Dorsolateral prefrontal cortex (tissue), 120 donors: ENCODE measurements at regions of chr3 and their contacts with region 1.

Region 1: GRCh38 chr3:9302425-9303181 is 53.2 kb upstream of the SRGAP3 start:
- DNase-seq: peak; percentile 74 to 91 (median 84)
- H3K4me3 ChIP-seq: peak overlapping the region; percentile 20 to 71 (median 52)
- H3K27ac ChIP-seq: peak overlapping the region in 34 of 59 donors; percentile 5 to 82 (median 46)
- H3K27me3 ChIP-seq: no peaks in the 10 kb centered on the region
- CTCF ChIP-seq: peak; percentile 77 to 99 (median 95)

Region 2: GRCh38 chr3:8970971-8971589 is 331.5 kb before region 1 on chr3:
- intact Hi-C with region 1: loop called (anchors 2 kb)
- DNase-seq: peak in 8 of 10 donors; percentile 45 to 78 (median 68)
- H3K4me3 ChIP-seq: peak overlapping the region in 37 of 59 donors; percentile 1 to 51 (median 25)
- H3K27ac ChIP-seq: peak overlapping the region in 3 of 59 donors; percentile 32 to 59 (median 50)
- H3K27me3 ChIP-seq: peaks cover 0 to 7% (median 0%) of the 10 kb centered on the region in 45 donors
- CTCF ChIP-seq: peak; percentile 90 to 100 (median 99)

Region 3: GRCh38 chr3:8987645-8988383 is 314.8 kb before region 1 on chr3:
- intact Hi-C with region 1: loop called (anchors 5 kb)
- DNase-seq: peak in 9 of 10 donors; percentile 61 to 83 (median 74)
- H3K4me3 ChIP-seq: no peak overlapping the region
- H3K27ac ChIP-seq: peak overlapping the region in 13 of 59 donors; percentile 6 to 69 (median 31)
- H3K27me3 ChIP-seq: no peaks in the 10 kb centered on the region
- CTCF ChIP-seq: peak; percentile 47 to 91 (median 83)

Region 4: DNA sequence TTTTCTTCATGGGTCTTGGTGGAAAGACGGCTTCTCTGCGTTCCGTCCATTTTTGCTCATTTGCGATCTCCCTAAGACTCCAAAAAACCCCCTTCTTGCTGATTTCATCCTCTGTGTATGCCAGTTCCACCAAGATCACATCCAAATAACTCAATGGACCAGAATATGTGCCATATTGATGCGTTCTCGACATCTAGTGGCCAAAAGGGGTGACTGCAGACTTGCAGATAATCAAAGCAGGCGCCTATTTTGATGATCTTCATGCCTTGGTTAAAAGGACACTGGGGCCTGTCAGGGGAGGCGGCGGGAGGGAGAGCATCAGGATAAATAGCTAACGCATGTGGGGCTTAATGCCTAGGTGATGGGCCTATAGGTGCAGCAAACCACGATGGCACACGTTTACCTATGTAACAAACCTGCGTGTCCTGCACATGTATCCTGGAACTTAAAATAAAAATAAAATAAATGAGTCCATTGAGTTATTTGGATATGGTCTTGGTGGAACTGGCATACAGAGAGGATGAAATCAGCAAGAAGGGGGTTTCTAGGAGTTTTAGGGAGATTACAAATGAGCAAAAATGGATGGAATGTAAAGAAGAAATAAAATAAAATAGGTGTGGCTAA is 235.1 kb before region 1 on chr3:
- intact Hi-C with region 1: loop called in 1 of 2 experiments (anchors 2 kb)
- DNase-seq: peak in 5 of 10 donors; percentile 42 to 81 (median 70)
- H3K4me3 ChIP-seq: peak overlapping the region in 1 of 59 donors; percentile 29
- H3K27ac ChIP-seq: peak overlapping the region in 49 of 59 donors; percentile 6 to 82 (median 60)
- H3K27me3 ChIP-seq: no peaks in the 10 kb centered on the region
- CTCF ChIP-seq: peak; percentile 69 to 96 (median 89)

Region 5: GRCh38 chr3:9078561-9079240 is 223.9 kb before region 1 on chr3:
- intact Hi-C with region 1: loop called in 1 of 2 experiments (anchors 5 kb)
- DNase-seq: no peak
- H3K4me3 ChIP-seq: no peak overlapping the region
- H3K27ac ChIP-seq: no peak overlapping the region
- H3K27me3 ChIP-seq: no peaks in the 10 kb centered on the region
- CTCF ChIP-seq: peak in 2 of 56 donors; percentile 3 to 11

Region 6: GRCh38 chr3:9172851-9173321 is 129.7 kb before region 1 on chr3:
- intact Hi-C with region 1: loop called in 1 of 2 experiments (anchors 5 kb)
- DNase-seq: peak in 5 of 10 donors; percentile 33 to 59 (median 58)
- H3K4me3 ChIP-seq: peak overlapping the region in 33 of 59 donors; percentile 2 to 48 (median 13)
- H3K27ac ChIP-seq: peak overlapping the region in 55 of 59 donors; percentile 1 to 84 (median 66)
- H3K27me3 ChIP-seq: no peaks in the 10 kb centered on the region
- CTCF ChIP-seq: peak in 34 of 56 donors; percentile 6 to 59 (median 31)

Region 7: DNA sequence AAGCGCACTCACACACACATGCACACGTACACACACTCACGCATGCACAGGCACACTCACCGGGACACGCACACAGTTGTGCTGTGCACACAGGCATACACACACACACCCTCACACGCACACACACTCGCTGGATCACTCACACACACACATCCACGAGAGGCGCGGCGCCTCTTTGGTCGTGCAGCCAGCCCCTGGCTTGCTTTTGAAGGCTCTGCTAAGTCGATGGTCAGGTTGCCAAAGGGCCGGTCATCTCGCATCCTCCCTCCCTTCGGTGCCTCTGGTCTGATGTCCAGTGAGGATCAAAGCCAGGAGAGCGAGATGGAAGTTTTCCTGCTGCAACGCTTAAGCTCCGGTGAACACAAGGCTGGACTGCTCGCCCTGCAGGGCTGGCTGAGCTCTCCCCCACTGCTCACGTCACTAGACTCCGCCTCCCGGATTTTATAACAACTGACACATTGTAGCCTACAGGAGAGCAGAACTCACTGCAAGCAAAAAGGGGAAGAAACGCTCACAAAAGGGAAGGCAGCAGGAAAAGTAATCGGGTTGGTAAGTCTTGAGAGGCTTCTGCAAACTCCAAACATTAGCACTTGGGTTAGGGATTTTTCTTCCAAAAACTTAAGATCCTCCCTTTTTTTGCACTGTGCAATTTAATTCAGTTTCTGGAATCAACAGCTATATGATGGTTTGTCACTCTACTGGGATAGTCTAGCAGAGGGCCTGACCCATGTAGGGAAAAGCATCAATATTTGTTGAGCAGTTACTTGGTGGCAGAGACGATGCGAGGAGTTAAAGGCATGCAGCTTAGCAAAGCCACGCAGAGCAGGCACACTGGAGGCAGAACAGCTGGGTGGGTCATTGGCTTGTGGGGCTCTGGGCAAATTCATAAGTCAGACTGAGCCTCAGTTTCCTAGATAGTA is 53.1 kb before region 1 on chr3 and contains the start of gene SRGAP3:
- intact Hi-C with region 1: loop called in 1 of 2 experiments (anchors 5 kb)
- DNase-seq: peak; percentile 63 to 96 (median 92)
- H3K4me3 ChIP-seq: peak within 1 kb of the TSS; percentile 48 to 91 (median 77)
- H3K27ac ChIP-seq: peak within 1 kb of the TSS; percentile 15 to 92 (median 81)
- H3K27me3 ChIP-seq: no peaks in the 10 kb centered on the region
- CTCF ChIP-seq: peak in 49 of 56 donors; percentile 20 to 66 (median 47)
- total RNA-seq, gene SRGAP3: 93.9 to 187 (median 139) TPM